K562 (cell line): ENCODE measurements at regions of chr9 and their contacts with region 1.

Region 1: GRCh38 chr9:101465392-101465791 is 29.8 kb upstream of the ALDOB start:
- DNase-seq: peak in 3 of 4 experiments; percentile 15 to 81 (median 57)
- ATAC-seq: peak; percentile 95
- H3K4me3 ChIP-seq: no peak overlapping the region
- H3K27ac ChIP-seq: no peak overlapping the region
- H3K4me1 ChIP-seq: peaks cover 0 to 15% of the 10 kb centered on the region in 2 experiments; a peak in 3 of 5 replicates
- H3K27me3 ChIP-seq: no peaks in the 10 kb centered on the region
- CTCF ChIP-seq: peak; percentile 59 to 78 (median 69)
- EP300 ChIP-seq: peak; percentile 8; the same call in 1 of the 2 replicates
- POLR2A ChIP-seq: no peak
- RAD21 ChIP-seq: peak; percentile 28 to 69; a peak in 3 of 4 replicates

Region 2: GRCh38 chr9:101427957-101428655 is 37.3 kb before region 1 on chr9:
- CTCF ChIA-PET with region 1: no interaction called
- POLR2A ChIA-PET with region 1: no interaction called
- in situ Hi-C with region 1: no loop called
- intact Hi-C with region 1: no loop called
- DNase-seq: no peak
- ATAC-seq: no peak
- H3K4me3 ChIP-seq: no peak overlapping the region
- H3K27ac ChIP-seq: no peak overlapping the region
- H3K4me1 ChIP-seq: no peaks in the 10 kb centered on the region
- H3K27me3 ChIP-seq: peaks cover 6 to 26% of the 10 kb centered on the region in 2 experiments; a peak in 3 of 5 replicates
- CTCF ChIP-seq: no peak
- EP300 ChIP-seq: no peak
- POLR2A ChIP-seq: no peak
- RAD21 ChIP-seq: no peak

Region 3: DNA sequence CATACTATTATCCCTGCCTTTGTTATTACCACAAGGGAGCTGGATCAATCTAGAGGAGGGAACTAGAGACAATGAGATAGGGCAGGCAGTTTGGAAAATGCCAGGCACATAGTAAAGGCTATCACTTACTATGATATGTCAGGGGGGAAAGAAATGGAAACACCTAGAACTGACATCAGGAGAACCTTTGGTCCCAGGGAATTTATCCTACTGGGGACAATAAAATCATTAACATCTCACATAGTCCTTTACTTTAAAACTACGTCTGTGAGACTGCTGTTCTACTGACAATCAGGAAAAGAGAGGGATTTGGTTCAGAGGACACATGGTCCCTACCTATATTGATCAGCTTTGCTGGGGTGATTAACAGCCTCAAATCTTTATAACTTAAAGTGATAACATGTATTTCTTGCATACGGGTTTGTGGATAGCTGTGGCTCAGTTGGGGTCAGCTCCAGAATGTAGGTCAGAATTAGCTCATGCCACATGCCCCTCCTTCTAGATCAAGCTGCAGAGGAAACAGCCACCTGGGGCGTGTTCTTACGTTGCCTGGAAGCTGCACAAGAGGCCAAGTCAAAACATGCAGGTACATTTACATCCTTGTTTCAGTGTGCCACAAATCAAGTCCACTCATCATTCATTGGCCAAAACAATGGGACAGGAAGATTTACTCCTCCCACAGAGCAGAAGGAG is 14.1 kb after region 1 on chr9:
- CTCF ChIA-PET with region 1: no interaction called
- POLR2A ChIA-PET with region 1: interaction called, 4 read pairs
- in situ Hi-C with region 1: no loop called
- intact Hi-C with region 1: loop called (anchors 2 kb)
- DNase-seq: no peak
- ATAC-seq: no peak
- H3K4me3 ChIP-seq: no peak overlapping the region
- H3K27ac ChIP-seq: no peak overlapping the region
- H3K4me1 ChIP-seq: peaks cover 9% of the 10 kb centered on the region in 2 experiments; a peak in 3 of 5 replicates
- H3K27me3 ChIP-seq: peaks cover 0 to 16% of the 10 kb centered on the region in 2 experiments; a peak in 2 of 5 replicates
- CTCF ChIP-seq: no peak
- EP300 ChIP-seq: no peak
- POLR2A ChIP-seq: no peak
- RAD21 ChIP-seq: no peak

Region 4: DNA sequence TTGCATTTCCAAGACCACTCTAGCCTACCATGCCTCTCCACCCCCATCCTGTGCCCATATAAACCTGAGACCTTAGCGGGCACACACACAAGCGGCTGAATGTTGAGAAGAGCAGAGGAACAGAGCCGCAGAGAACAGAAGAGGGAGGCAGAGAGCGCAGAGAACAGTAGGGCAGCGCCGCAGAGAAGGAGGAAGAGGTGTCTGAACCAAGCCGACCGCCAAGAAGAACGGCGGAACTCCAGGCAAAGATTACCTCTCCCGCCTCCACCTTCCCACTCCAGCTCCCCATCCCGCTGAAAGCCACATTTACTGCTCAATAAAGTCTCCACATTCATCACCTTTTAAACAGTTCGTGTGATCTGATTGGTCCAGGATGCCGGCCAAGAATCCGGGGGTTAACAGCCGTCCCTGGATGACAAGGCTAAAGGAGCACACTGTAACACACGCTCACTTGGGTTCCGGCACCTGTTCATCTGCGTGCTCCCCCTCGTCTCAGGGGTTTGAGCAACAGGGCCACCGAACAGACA is 239.8 kb after region 1 on chr9:
- CTCF ChIA-PET with region 1: no interaction called
- POLR2A ChIA-PET with region 1: no interaction called
- in situ Hi-C with region 1: no loop called
- intact Hi-C with region 1: no loop called
- DNase-seq: no peak
- ATAC-seq: peak; percentile 31; the same call in 1 of the 3 replicates
- H3K4me3 ChIP-seq: no peak overlapping the region
- H3K27ac ChIP-seq: no peak overlapping the region
- H3K4me1 ChIP-seq: no peaks in the 10 kb centered on the region
- H3K27me3 ChIP-seq: no peaks in the 10 kb centered on the region
- CTCF ChIP-seq: no peak
- EP300 ChIP-seq: no peak
- POLR2A ChIP-seq: no peak
- RAD21 ChIP-seq: no peak